ENCODE measurements at regions of chr2 and their contacts with region 1.

Region 1: DNA sequence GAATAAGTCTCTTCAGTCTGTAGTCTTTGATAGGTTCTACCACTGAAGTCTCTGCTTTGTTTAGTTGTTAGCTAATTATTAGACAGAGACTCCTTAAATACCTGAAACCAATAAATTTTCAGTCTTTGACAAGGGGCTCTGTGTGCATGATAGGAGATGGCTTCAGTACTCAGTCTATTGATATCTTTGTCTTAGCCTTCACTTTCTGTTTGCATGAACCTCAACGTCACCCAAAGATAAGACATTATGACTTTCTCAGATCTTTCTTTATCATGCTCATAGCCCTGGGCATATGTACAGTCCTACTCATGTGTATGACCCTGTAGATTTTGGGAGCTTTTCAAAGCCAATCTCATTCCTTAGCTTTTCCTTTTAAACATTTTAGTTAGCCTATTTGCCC is 183.5 kb upstream of the GCFC2 start:
- DNase-seq: peak in 1 of 2 experiments; percentile 74
- H3K4me3 ChIP-seq: no peak overlapping the region
- H3K4me3 Mint-ChIP-seq: no peak overlapping the region
- H3K27ac Mint-ChIP-seq: peak overlapping the region; percentile 64
- H3K4me1 ChIP-seq: peaks cover 23% of the 10 kb centered on the region
- H3K4me1 Mint-ChIP-seq: peaks cover 26% of the 10 kb centered on the region
- H3K27me3 ChIP-seq: no peaks in the 10 kb centered on the region
- H3K27me3 Mint-ChIP-seq: no peaks in the 10 kb centered on the region
- CTCF ChIP-seq: no peak

Region 2: GRCh38 chr2:75710577-75711253 is 183.5 kb before region 1 on chr2 and contains the start of gene GCFC2:
- CTCF ChIA-PET with region 1: no interaction called
- POLR2A ChIA-PET with region 1: no interaction called
- intact Hi-C with region 1: no loop called
- DNase-seq: peak; percentile 88 to 93
- H3K4me3 ChIP-seq: peak within 1 kb of the TSS; percentile 69
- H3K4me3 Mint-ChIP-seq: peak within 1 kb of the TSS; percentile 74
- H3K27ac Mint-ChIP-seq: peak within 1 kb of the TSS; percentile 94
- H3K4me1 ChIP-seq: peaks cover 7% of the 10 kb centered on the region; the same call in 1 of the 2 replicates
- H3K4me1 Mint-ChIP-seq: peaks cover 15% of the 10 kb centered on the region
- H3K27me3 ChIP-seq: no peaks in the 10 kb centered on the region
- H3K27me3 Mint-ChIP-seq: peaks cover 6% of the 10 kb centered on the region
- CTCF ChIP-seq: peak; percentile 28 to 43
- total RNA-seq, gene GCFC2: 22.5 and 26.4 TPM in 2 replicates

Region 3: DNA sequence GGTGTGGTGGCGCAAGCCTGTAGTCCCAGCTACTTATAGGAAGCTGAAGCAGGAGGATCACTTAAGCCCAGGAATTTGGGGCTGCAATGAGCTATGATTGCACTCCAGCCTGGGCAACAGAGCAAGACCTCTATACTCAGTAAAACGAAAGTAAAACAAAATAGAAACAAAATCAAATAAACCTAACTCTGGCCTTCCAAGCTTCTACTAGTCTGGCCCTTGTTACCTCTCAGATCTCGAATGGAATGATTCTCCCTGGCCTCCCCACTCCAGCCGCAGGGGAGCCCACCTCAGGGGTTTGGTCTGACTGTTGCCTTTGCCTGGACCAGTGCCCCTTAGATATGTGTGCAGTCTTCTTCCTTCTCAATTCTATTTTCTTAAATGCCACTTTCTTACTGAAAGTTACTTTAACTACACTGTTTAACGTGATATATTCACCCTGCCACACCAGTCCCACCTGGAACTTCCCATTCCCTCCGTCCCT is 23.5 kb before region 1 on chr2:
- CTCF ChIA-PET with region 1: no interaction called
- POLR2A ChIA-PET with region 1: no interaction called
- intact Hi-C with region 1: no loop called
- DNase-seq: no peak
- H3K4me3 ChIP-seq: no peak overlapping the region
- H3K4me3 Mint-ChIP-seq: no peak overlapping the region
- H3K27ac Mint-ChIP-seq: no peak overlapping the region
- H3K4me1 ChIP-seq: no peaks in the 10 kb centered on the region
- H3K4me1 Mint-ChIP-seq: no peaks in the 10 kb centered on the region
- H3K27me3 ChIP-seq: no peaks in the 10 kb centered on the region
- H3K27me3 Mint-ChIP-seq: no peaks in the 10 kb centered on the region
- CTCF ChIP-seq: no peak

Region 4: DNA sequence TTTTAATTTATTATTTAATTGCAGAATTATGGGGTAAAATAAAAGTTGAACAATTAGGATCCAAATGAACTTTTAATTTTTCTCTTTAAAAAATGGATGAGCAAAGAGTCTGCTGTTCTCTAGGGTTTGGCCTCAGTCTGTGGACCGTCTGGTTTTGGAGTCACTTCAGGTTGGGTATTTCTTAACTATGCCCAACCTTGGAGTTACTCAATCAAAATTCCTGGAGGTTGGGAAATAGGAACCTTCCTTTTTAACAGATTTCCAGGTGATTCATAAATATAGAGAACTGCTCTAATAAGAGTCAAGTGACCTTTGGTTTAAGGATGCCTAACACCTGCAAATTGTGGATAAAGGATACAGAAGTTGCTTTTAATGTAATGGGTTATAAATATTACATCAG is 58.0 kb after region 1 on chr2:
- CTCF ChIA-PET with region 1: no interaction called
- POLR2A ChIA-PET with region 1: no interaction called
- intact Hi-C with region 1: loop called (anchors 1 kb)
- DNase-seq: peak in 1 of 2 experiments; percentile 8
- H3K4me3 ChIP-seq: no peak overlapping the region
- H3K4me3 Mint-ChIP-seq: no peak overlapping the region
- H3K27ac Mint-ChIP-seq: no peak overlapping the region
- H3K4me1 ChIP-seq: no peaks in the 10 kb centered on the region
- H3K4me1 Mint-ChIP-seq: no peaks in the 10 kb centered on the region
- H3K27me3 ChIP-seq: no peaks in the 10 kb centered on the region; the same call in 1 of the 2 replicates
- H3K27me3 Mint-ChIP-seq: peaks cover 3% of the 10 kb centered on the region
- CTCF ChIP-seq: no peak

Region 5: DNA sequence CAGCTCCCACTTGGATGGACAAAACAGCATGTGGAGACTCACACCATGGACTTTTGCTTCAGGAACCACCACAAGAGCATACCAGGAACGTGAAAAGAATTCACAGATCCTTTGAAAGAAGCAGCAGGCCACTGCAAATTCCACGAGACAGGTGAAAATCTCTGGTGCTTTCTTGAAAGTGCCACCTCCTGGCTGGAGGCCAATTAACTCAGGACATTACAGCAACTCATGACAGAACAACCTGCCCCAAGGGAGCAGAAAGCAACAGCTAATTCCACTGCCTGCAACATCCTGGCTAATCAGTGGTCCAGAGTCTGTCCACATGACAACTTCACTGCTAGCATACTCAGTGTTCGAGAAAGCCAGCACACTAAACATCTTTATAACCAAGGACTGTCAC is 74.7 kb after region 1 on chr2:
- CTCF ChIA-PET with region 1: no interaction called
- POLR2A ChIA-PET with region 1: no interaction called
- intact Hi-C with region 1: loop called (anchors 5 kb)
- DNase-seq: no peak
- H3K4me3 ChIP-seq: no peak overlapping the region
- H3K4me3 Mint-ChIP-seq: no peak overlapping the region
- H3K27ac Mint-ChIP-seq: no peak overlapping the region
- H3K4me1 ChIP-seq: no peaks in the 10 kb centered on the region
- H3K4me1 Mint-ChIP-seq: no peaks in the 10 kb centered on the region
- H3K27me3 ChIP-seq: no peaks in the 10 kb centered on the region
- H3K27me3 Mint-ChIP-seq: peaks cover 3% of the 10 kb centered on the region
- CTCF ChIP-seq: no peak

Region 6: DNA sequence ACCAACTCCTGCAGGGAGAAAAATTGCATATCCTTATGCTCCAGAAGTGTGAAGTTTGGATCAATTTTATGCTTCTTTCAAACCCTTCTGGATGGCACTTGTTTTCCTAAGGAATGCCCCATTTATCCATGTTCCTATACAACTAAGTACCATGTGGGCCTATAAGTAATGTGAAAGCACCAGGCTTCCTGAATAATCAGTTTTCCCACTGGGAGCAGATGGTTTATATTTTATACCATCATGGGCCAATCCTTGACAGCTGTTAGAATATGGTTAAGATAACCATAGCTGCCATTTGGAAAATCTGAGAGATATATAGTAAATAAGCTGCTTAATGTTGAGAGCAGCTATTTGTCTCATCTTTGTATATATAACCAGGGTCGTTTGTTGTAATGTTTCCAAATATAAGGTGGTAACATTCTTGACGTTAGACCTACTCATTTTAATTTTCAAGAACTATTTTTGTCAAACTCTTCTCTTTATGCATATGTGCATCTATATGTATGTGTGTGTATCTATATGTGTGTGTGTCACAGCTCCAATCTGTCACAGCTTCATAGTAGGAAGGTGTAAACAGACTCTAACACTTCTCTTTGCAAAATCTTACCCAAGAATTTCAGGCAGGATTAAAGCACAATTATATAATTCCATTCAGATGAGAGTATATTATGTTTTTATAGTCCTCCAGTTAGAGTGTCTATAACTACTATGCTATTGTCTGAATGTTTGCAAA is 275.3 kb after region 1 on chr2:
- CTCF ChIA-PET with region 1: no interaction called
- POLR2A ChIA-PET with region 1: no interaction called
- intact Hi-C with region 1: loop called (anchors 1 kb)
- DNase-seq: no peak
- H3K4me3 ChIP-seq: no peak overlapping the region
- H3K4me3 Mint-ChIP-seq: no peak overlapping the region
- H3K27ac Mint-ChIP-seq: no peak overlapping the region
- H3K4me1 ChIP-seq: peaks cover 21% of the 10 kb centered on the region
- H3K4me1 Mint-ChIP-seq: peaks cover 30% of the 10 kb centered on the region
- H3K27me3 ChIP-seq: no peaks in the 10 kb centered on the region
- H3K27me3 Mint-ChIP-seq: no peaks in the 10 kb centered on the region
- CTCF ChIP-seq: no peak

Measured in Caco-2 (cell line).